Caco-2 (cell line): ENCODE measurements at regions of chr13 and their contacts with region 1.

Region 1: DNA sequence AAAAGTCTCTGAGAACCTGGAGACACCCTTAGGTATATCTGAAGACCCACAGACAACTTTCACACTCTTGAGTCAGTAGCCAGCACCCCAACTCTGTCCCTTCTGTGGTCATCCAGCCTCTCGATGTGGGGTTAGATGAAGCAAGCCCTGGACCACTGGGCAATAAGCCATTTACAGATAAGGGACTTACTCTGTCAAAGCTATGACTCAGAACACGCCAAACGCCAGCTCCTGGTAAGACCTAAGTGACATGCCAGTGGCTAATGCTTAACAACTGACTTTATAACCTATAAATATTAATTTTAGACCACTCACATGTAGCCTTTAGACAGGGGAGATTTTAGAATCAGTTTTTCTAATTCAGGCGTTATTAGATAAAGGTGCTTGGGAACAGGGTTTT is 85.7 kb downstream of the SHISA2 start:
- DNase-seq: no peak
- H3K4me3 ChIP-seq: no peak overlapping the region
- H3K4me3 Mint-ChIP-seq: no peak overlapping the region
- H3K27ac Mint-ChIP-seq: no peak overlapping the region
- H3K4me1 ChIP-seq: peaks cover 23% of the 10 kb centered on the region
- H3K4me1 Mint-ChIP-seq: peaks cover 17% of the 10 kb centered on the region
- H3K27me3 ChIP-seq: no peaks in the 10 kb centered on the region
- H3K27me3 Mint-ChIP-seq: no peaks in the 10 kb centered on the region
- CTCF ChIP-seq: no peak

Region 2: DNA sequence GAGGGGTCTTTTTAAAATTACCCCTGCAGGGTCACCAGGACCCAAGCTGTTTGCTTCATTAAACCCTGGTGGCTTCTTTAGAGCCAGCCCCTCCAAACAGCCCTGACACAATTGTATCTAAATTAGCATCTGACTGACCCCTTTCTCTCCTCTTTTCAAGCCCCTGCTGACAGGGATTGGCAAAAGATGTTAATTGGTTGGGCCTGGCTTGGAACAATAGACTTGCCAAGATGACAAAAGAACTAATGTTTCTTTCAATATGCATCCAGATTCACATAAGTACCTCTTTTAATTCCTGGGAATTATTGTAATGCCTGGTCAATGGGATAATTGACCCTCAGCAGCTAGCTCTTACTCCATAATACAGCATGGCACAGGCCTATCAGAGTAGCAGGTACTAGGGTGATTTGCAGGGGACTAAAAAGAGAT is 55.1 kb before region 1 on chr13:
- CTCF ChIA-PET with region 1: no interaction called
- POLR2A ChIA-PET with region 1: no interaction called
- intact Hi-C with region 1: loop called (anchors 1 kb)
- DNase-seq: no peak
- H3K4me3 ChIP-seq: no peak overlapping the region
- H3K4me3 Mint-ChIP-seq: no peak overlapping the region
- H3K27ac Mint-ChIP-seq: no peak overlapping the region
- H3K4me1 ChIP-seq: peaks cover 17% of the 10 kb centered on the region
- H3K4me1 Mint-ChIP-seq: no peaks in the 10 kb centered on the region
- H3K27me3 ChIP-seq: no peaks in the 10 kb centered on the region
- H3K27me3 Mint-ChIP-seq: no peaks in the 10 kb centered on the region
- CTCF ChIP-seq: no peak

Region 3: GRCh38 chr13:25922376-25922775 is 43.7 kb before region 1 on chr13:
- CTCF ChIA-PET with region 1: no interaction called
- POLR2A ChIA-PET with region 1: no interaction called
- intact Hi-C with region 1: loop called (anchors 5 kb)
- DNase-seq: no peak
- H3K4me3 ChIP-seq: no peak overlapping the region
- H3K4me3 Mint-ChIP-seq: no peak overlapping the region
- H3K27ac Mint-ChIP-seq: no peak overlapping the region
- H3K4me1 ChIP-seq: no peaks in the 10 kb centered on the region
- H3K4me1 Mint-ChIP-seq: peaks cover 10% of the 10 kb centered on the region
- H3K27me3 ChIP-seq: no peaks in the 10 kb centered on the region
- H3K27me3 Mint-ChIP-seq: no peaks in the 10 kb centered on the region
- CTCF ChIP-seq: no peak

Region 4: GRCh38 chr13:25980255-25980654 is 14.2 kb after region 1 on chr13:
- CTCF ChIA-PET with region 1: no interaction called
- POLR2A ChIA-PET with region 1: no interaction called
- intact Hi-C with region 1: loop called (anchors 1 kb)
- DNase-seq: peak in 1 of 2 experiments; percentile 44
- H3K4me3 ChIP-seq: no peak overlapping the region
- H3K4me3 Mint-ChIP-seq: no peak overlapping the region
- H3K27ac Mint-ChIP-seq: peak overlapping the region; percentile 88
- H3K4me1 ChIP-seq: peaks cover 23% of the 10 kb centered on the region
- H3K4me1 Mint-ChIP-seq: peaks cover 35% of the 10 kb centered on the region
- H3K27me3 ChIP-seq: no peaks in the 10 kb centered on the region
- H3K27me3 Mint-ChIP-seq: no peaks in the 10 kb centered on the region
- CTCF ChIP-seq: peak; percentile 43 to 51

Region 5: GRCh38 chr13:26022538-26023292 is 56.6 kb after region 1 on chr13:
- CTCF ChIA-PET with region 1: no interaction called
- POLR2A ChIA-PET with region 1: no interaction called
- intact Hi-C with region 1: loop called (anchors 5 kb)
- DNase-seq: peak; percentile 84 to 88
- H3K4me3 ChIP-seq: no peak overlapping the region
- H3K4me3 Mint-ChIP-seq: no peak overlapping the region
- H3K27ac Mint-ChIP-seq: no peak overlapping the region
- H3K4me1 ChIP-seq: peaks cover 17% of the 10 kb centered on the region
- H3K4me1 Mint-ChIP-seq: peaks cover 34% of the 10 kb centered on the region
- H3K27me3 ChIP-seq: no peaks in the 10 kb centered on the region
- H3K27me3 Mint-ChIP-seq: peaks cover 3% of the 10 kb centered on the region
- CTCF ChIP-seq: no peak

Region 6: DNA sequence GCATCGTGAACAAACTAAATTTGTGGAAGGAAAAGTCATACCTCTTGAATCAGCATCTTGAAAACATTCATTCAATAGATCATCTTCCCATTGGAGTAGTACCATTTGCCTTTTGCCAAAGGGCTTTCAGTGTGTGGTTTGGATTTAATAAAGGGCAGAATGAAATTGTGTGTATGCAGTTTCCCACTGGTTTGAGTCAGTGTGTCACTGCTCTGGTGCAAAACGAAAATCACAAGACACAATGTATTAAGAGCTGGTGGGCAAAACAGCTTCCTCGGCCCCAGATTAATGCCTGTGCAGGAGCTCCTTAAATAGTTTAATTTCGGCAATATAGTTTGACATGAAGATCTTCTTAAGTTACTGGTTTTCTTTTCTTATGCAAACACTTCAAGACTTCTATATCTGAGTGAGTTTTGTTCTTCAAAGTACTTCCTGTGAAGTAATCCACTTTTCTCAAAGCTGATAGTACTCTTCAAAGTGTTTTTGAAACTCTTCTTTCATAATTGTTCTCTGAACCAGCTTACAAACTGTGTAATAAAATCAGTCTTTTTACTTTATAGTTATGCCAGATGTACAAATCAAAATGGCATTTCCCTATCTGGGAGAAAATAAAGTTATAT is 1336.7 kb after region 1 on chr13:
- CTCF ChIA-PET with region 1: no interaction called
- POLR2A ChIA-PET with region 1: no interaction called
- intact Hi-C with region 1: no loop called
- DNase-seq: no peak
- H3K4me3 ChIP-seq: no peak overlapping the region
- H3K4me3 Mint-ChIP-seq: no peak overlapping the region
- H3K27ac Mint-ChIP-seq: no peak overlapping the region
- H3K4me1 ChIP-seq: no peaks in the 10 kb centered on the region
- H3K4me1 Mint-ChIP-seq: no peaks in the 10 kb centered on the region
- H3K27me3 ChIP-seq: peaks cover 1% of the 10 kb centered on the region
- H3K27me3 Mint-ChIP-seq: peaks cover 7% of the 10 kb centered on the region
- CTCF ChIP-seq: no peak